Activated CD4-positive, alpha-beta T cell treated with anti-CD3 and anti-CD28 coated beads for 36 hours (primary cell): ENCODE measurements at regions of chr9 and their contacts with region 1.

Region 1: DNA sequence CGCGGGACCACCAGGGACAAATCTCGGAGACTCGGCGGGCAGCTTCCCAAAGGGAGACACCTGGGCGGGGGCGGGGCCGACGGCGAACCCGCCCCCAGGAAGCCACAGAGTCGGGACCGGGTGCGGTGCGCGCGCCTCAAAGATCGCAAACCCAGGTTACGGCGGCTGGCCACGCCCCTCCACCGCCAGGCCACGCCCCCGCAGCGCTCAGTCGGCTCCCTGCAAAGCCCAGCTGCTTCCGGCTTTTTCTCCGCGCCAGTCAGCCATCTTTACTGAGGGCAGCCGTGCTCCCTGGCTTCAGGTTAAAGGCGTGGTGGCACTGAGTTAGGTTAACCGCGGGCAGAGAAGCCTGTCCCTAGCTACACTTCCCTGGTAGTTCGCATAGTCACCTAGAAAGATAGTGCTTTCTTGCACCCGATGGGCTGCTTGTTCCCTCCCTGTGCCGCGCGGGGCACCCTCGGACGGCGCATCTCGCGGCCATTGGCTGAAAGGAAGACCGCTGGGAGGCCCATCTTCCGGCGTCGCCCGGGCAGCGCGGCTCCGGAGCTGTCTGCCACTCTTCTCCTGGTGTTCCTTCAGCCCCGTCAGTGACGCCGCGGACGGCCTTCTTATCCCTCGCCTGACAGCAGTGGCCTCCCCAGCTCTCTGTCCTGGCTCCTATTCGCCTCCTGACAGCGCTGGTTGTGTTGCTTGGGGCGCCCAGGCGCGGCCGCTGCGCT is at the start of gene TBC1D2:
- DNase-seq: peak; percentile 99
- ATAC-seq: peak; percentile 87
- H3K4me3 Mint-ChIP-seq: peak within 1 kb of the TSS; percentile 94
- H3K27ac Mint-ChIP-seq: peak within 1 kb of the TSS; percentile 98
- H3K4me1 Mint-ChIP-seq: peaks cover 17% of the 10 kb centered on the region
- H3K27me3 Mint-ChIP-seq: no peaks in the 10 kb centered on the region
- total RNA-seq, gene TBC1D2: 2.8 to 3.2 TPM

Region 2: DNA sequence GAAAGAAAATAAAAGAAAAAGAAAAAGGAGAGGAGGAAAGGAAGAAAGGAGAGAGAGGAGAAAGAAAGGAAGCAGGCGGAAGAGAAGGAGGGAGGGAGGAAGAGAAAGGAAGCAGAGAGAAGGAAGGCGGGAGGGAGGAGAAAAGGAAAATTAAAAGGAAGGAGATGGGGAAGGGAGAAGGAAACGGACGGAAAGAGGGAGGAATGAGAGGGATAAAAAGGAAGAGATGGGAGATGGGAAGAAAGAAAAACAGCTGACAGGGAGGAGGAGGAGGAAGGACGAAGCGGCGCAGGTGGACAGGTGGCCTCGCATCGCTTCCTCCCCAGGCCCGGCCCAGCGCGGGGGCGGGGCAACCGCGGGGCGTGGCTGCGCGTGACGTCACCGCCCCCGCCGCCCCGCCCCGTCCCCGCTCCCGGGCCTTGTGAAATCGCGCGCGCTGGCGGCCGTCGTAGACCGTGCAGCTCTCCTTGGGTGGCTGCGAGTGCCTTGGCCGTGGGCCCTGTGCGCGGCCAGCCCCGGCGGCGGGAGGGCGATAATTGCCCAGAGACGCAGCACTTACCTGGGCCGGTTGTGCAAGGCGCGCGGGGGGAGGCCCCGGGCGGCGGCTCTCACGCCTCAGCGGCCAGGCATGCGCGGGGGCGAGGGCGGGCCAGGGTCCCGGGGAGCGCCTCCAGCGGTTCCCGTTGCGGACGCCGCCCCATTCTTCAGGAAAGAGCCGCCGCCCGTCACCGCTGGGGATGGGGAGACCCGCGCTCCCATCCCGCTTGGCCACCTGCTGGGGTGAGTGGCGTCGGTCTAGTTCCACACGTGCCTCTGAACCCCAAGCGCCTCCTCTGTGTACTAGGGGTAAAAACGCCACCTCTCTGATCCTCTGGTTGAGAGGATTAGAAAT is 452.3 kb before region 1 on chr9:
- CTCF ChIA-PET with region 1: no interaction called
- POLR2A ChIA-PET with region 1: no interaction called
- intact Hi-C with region 1: loop called in 1 of 2 experiments (anchors 5 kb)
- DNase-seq: peak; percentile 86
- ATAC-seq: peak; percentile 90
- H3K4me3 Mint-ChIP-seq: peak overlapping the region; percentile 72
- H3K27ac Mint-ChIP-seq: peak overlapping the region; percentile 67
- H3K4me1 Mint-ChIP-seq: peaks cover 10% of the 10 kb centered on the region
- H3K27me3 Mint-ChIP-seq: peaks cover 21% of the 10 kb centered on the region

Region 3: GRCh38 chr9:98056269-98057137 is 199.2 kb before region 1 on chr9 and contains the start of gene NANS:
- CTCF ChIA-PET with region 1: interaction called, 3 read pairs
- POLR2A ChIA-PET with region 1: interaction called, 10 read pairs
- intact Hi-C with region 1: loop called (anchors 1 to 2 kb)
- DNase-seq: peak; percentile 97
- ATAC-seq: peak; percentile 94
- H3K4me3 Mint-ChIP-seq: peak within 1 kb of the TSS; percentile 94
- H3K27ac Mint-ChIP-seq: peak within 1 kb of the TSS; percentile 98
- H3K4me1 Mint-ChIP-seq: peaks cover 28% of the 10 kb centered on the region
- H3K27me3 Mint-ChIP-seq: no peaks in the 10 kb centered on the region
- total RNA-seq, gene NANS: 45.9 to 47.7 TPM

Region 4: GRCh38 chr9:98101868-98102273 is 153.9 kb before region 1 on chr9:
- CTCF ChIA-PET with region 1: interaction called, 5 read pairs
- POLR2A ChIA-PET with region 1: no interaction called
- intact Hi-C with region 1: loop called in 1 of 2 experiments (anchors 1 kb)
- DNase-seq: peak; percentile 86
- ATAC-seq: peak; percentile 96
- H3K4me3 Mint-ChIP-seq: peak overlapping the region; percentile 49
- H3K27ac Mint-ChIP-seq: peak overlapping the region; percentile 95
- H3K4me1 Mint-ChIP-seq: peaks cover 84% of the 10 kb centered on the region
- H3K27me3 Mint-ChIP-seq: no peaks in the 10 kb centered on the region

Region 5: GRCh38 chr9:98192503-98193335 is 63.0 kb before region 1 on chr9 and contains the start of gene CORO2A:
- CTCF ChIA-PET with region 1: interaction called, 8 read pairs
- POLR2A ChIA-PET with region 1: interaction called, 3 read pairs
- intact Hi-C with region 1: loop called (anchors 1 to 5 kb)
- DNase-seq: peak; percentile 83
- ATAC-seq: peak; percentile 78
- H3K4me3 Mint-ChIP-seq: peak within 1 kb of the TSS; percentile 78
- H3K27ac Mint-ChIP-seq: peak within 1 kb of the TSS; percentile 65
- H3K4me1 Mint-ChIP-seq: peaks cover 26% of the 10 kb centered on the region
- H3K27me3 Mint-ChIP-seq: no peaks in the 10 kb centered on the region
- total RNA-seq, gene CORO2A: 9.7 to 10.3 TPM

Region 6: DNA sequence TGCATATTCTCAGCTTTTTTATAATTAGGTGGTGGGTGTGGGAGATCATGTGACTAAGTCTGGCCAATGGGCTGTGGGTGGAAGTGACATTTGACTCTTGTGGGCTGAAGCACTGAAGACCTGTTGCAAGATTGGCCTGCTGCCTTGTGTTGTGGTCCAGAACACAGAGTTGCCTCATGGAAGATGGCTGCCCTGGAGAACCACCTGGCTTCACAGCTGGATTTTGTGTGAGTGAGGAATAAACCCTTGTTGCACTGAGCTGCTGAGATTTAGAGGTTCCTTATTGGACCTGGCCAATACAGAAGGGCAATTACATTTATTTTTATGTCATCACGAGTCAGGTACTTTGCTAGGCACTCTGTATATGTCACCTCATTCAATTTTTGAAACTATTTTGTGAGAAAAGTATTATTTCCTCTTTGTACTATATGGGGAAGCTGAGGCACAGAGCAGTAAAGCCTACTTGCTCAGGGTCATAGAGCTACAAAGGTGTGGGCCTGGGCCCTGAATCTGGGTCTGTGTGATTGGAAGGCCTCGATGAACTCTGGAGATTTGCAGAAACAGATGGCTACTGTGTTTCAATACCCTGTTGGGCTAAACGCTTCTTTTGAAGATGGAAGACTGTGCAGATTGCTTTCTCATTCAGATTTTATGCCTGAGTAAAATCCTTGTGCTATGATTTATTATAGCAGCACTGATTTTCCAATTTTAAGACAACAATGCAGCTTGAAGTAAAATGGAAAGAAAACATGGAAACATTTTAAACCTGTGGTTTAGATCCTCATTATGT is 70.9 kb after region 1 on chr9:
- CTCF ChIA-PET with region 1: no interaction called
- POLR2A ChIA-PET with region 1: no interaction called
- intact Hi-C with region 1: no loop called
- DNase-seq: peak; percentile 21
- ATAC-seq: peak; percentile 33
- H3K4me3 Mint-ChIP-seq: no peak overlapping the region
- H3K27ac Mint-ChIP-seq: no peak overlapping the region
- H3K4me1 Mint-ChIP-seq: peaks cover 4% of the 10 kb centered on the region
- H3K27me3 Mint-ChIP-seq: peaks cover 6% of the 10 kb centered on the region

Region 7: GRCh38 chr9:99104459-99105151 is 848.9 kb after region 1 on chr9 and contains the start of gene TGFBR1:
- CTCF ChIA-PET with region 1: no interaction called
- POLR2A ChIA-PET with region 1: no interaction called
- intact Hi-C with region 1: loop called in 1 of 2 experiments (anchors 5 kb)
- DNase-seq: peak; percentile 95
- ATAC-seq: peak; percentile 89
- H3K4me3 Mint-ChIP-seq: peak within 1 kb of the TSS; percentile 79
- H3K27ac Mint-ChIP-seq: peak within 1 kb of the TSS; percentile 83
- H3K4me1 Mint-ChIP-seq: peaks cover 49% of the 10 kb centered on the region
- H3K27me3 Mint-ChIP-seq: no peaks in the 10 kb centered on the region
- total RNA-seq, gene TGFBR1: 18.6 to 19.3 TPM